ENCODE measurements at regions of chr2 and their contacts with region 1.

Region 1: GRCh38 chr2:224369028-224369632 is 32.8 kb downstream of the FAM124B start:
- DNase-seq: no peak
- ATAC-seq: peak; percentile 79
- H3K4me3 Mint-ChIP-seq: no peak overlapping the region
- H3K27ac Mint-ChIP-seq: no peak overlapping the region
- H3K4me1 Mint-ChIP-seq: peaks cover 3% of the 10 kb centered on the region; the same call in 1 of the 2 replicates
- H3K27me3 Mint-ChIP-seq: no peaks in the 10 kb centered on the region; the same call in 1 of the 2 replicates
- CTCF ChIP-seq: peak; percentile 64

Region 2: DNA sequence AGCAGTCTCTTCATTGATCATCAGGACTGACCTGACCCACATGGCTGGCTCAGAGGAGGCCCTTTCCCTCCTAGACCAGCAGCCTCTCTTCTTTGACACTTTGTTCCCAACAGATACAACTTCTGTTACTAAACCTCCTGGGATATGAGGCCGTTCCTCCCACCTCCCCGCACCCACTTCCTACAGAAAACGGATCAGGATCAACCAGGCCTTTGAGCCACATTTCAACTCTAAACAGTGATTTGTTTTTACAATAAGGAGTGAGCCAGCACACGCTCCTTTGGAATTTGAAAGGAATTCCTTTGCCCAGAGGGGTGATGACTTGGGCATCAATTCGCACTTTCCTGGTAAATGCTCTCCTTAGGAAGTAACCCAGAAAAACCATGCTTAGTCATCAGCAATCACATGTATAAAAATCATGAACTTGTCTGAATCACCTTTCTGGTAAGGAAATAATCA is 147.6 kb before region 1 on chr2:
- CTCF ChIA-PET with region 1: no interaction called
- POLR2A ChIA-PET with region 1: no interaction called
- DNase-seq: no peak
- ATAC-seq: peak; percentile 68
- H3K4me3 Mint-ChIP-seq: no peak overlapping the region
- H3K27ac Mint-ChIP-seq: peak overlapping the region; percentile 53
- H3K4me1 Mint-ChIP-seq: peaks cover 54% of the 10 kb centered on the region
- H3K27me3 Mint-ChIP-seq: no peaks in the 10 kb centered on the region; the same call in 1 of the 2 replicates
- CTCF ChIP-seq: no peak

Region 3: GRCh38 chr2:224357098-224357901 is 11.8 kb before region 1 on chr2:
- CTCF ChIA-PET with region 1: interaction called, 14 read pairs
- POLR2A ChIA-PET with region 1: no interaction called
- DNase-seq: peak; percentile 40
- ATAC-seq: peak; percentile 62
- H3K4me3 Mint-ChIP-seq: no peak overlapping the region
- H3K27ac Mint-ChIP-seq: no peak overlapping the region
- H3K4me1 Mint-ChIP-seq: no peaks in the 10 kb centered on the region
- H3K27me3 Mint-ChIP-seq: no peaks in the 10 kb centered on the region
- CTCF ChIP-seq: peak; percentile 62

Measured in WTC11 (cell line).